ENCODE measurements at regions of chr3 and their contacts with region 1.

Region 1: GRCh38 chr3:186617038-186617946 is 4.4 kb downstream of the AHSG start:
- DNase-seq: peak; percentile 67 to 87 (median 83)
- ATAC-seq: peak; percentile 99
- H3K4me3 ChIP-seq: peak overlapping the region; percentile 23
- H3K4me3 Mint-ChIP-seq: peak overlapping the region; percentile 47 to 81 (median 74)
- H3K27ac ChIP-seq: no peak overlapping the region
- H3K27ac Mint-ChIP-seq: peak overlapping the region in 8 of 9 donors; percentile 51 to 81 (median 62)
- H3K4me1 ChIP-seq: peaks cover 5 to 10% of the 10 kb centered on the region in 2 donors
- H3K4me1 Mint-ChIP-seq: peaks cover 14 to 30% (median 21%) of the 10 kb centered on the region in 7 donors
- H3K27me3 ChIP-seq: no peaks in the 10 kb centered on the region
- H3K27me3 Mint-ChIP-seq: peaks cover 14 to 51% (median 26%) of the 10 kb centered on the region in 5 donors

Region 2: GRCh38 chr3:185659942-185660921 is 957.1 kb before region 1 on chr3:
- CTCF ChIA-PET with region 1: no interaction called
- POLR2A ChIA-PET with region 1: no interaction called
- intact Hi-C with region 1: loop called in 1 of 2 experiments (anchors 2 kb)
- DNase-seq: peak; percentile 35 to 60 (median 46)
- ATAC-seq: peak; percentile 88
- H3K4me3 ChIP-seq: no peak overlapping the region
- H3K4me3 Mint-ChIP-seq: no peak overlapping the region
- H3K27ac ChIP-seq: no peak overlapping the region
- H3K27ac Mint-ChIP-seq: no peak overlapping the region
- H3K4me1 ChIP-seq: no peaks in the 10 kb centered on the region
- H3K4me1 Mint-ChIP-seq: peaks cover 0 to 10% (median 0%) of the 10 kb centered on the region in 7 donors
- H3K27me3 ChIP-seq: no peaks in the 10 kb centered on the region
- H3K27me3 Mint-ChIP-seq: peaks cover 15 to 40% (median 20%) of the 10 kb centered on the region in 5 donors

Region 3: GRCh38 chr3:185983495-185984141 is 633.7 kb before region 1 on chr3:
- CTCF ChIA-PET with region 1: interaction called, 13 read pairs
- POLR2A ChIA-PET with region 1: no interaction called
- intact Hi-C with region 1: loop called (anchors 1 kb)
- DNase-seq: peak; percentile 7 to 62 (median 42)
- ATAC-seq: peak; percentile 83
- H3K4me3 ChIP-seq: no peak overlapping the region
- H3K4me3 Mint-ChIP-seq: no peak overlapping the region
- H3K27ac ChIP-seq: no peak overlapping the region
- H3K27ac Mint-ChIP-seq: no peak overlapping the region
- H3K4me1 ChIP-seq: no peaks in the 10 kb centered on the region
- H3K4me1 Mint-ChIP-seq: peaks cover 0 to 6% (median 5%) of the 10 kb centered on the region in 7 donors
- H3K27me3 ChIP-seq: no peaks in the 10 kb centered on the region
- H3K27me3 Mint-ChIP-seq: peaks cover 0 to 20% (median 7%) of the 10 kb centered on the region in 5 donors

Region 4: DNA sequence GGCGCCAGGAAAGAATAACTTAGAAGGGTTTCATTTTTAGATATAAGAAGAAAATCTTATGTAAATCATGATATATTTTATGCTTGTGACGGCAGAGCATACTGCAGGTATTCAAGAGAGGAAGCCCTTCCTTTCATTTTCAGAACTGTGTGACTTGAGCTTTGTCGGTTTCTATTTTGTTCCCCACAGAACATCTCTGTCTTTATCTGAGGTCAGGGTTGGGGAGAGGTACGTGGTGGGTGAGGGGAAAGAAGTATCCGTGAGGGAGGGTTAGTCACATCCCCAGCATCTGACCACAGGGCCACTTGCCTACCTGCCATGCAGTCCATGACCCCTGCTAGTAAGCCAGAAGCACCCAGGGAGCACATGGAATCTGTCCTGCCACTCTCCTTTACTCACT is 381.7 kb before region 1 on chr3:
- CTCF ChIA-PET with region 1: no interaction called
- POLR2A ChIA-PET with region 1: no interaction called
- intact Hi-C with region 1: no loop called
- DNase-seq: peak in 1 of 9 donors; percentile 16
- ATAC-seq: peak; percentile 41
- H3K4me3 ChIP-seq: no peak overlapping the region
- H3K4me3 Mint-ChIP-seq: peak overlapping the region; percentile 13 to 78 (median 56)
- H3K27ac ChIP-seq: no peak overlapping the region
- H3K27ac Mint-ChIP-seq: peak overlapping the region in 8 of 9 donors; percentile 8 to 92 (median 53)
- H3K4me1 ChIP-seq: peaks cover 0 to 6% of the 10 kb centered on the region in 2 donors
- H3K4me1 Mint-ChIP-seq: peaks cover 7 to 21% (median 14%) of the 10 kb centered on the region in 7 donors
- H3K27me3 ChIP-seq: no peaks in the 10 kb centered on the region
- H3K27me3 Mint-ChIP-seq: peaks cover 0 to 6% (median 0%) of the 10 kb centered on the region in 5 donors

Region 5: GRCh38 chr3:186413615-186414415 is 203.5 kb before region 1 on chr3:
- CTCF ChIA-PET with region 1: no interaction called
- POLR2A ChIA-PET with region 1: no interaction called
- intact Hi-C with region 1: no loop called
- DNase-seq: peak in 3 of 9 donors; percentile 1 to 5 (median 3)
- ATAC-seq: peak; percentile 55
- H3K4me3 ChIP-seq: peak overlapping the region; percentile 47
- H3K4me3 Mint-ChIP-seq: peak overlapping the region; percentile 61 to 87 (median 74)
- H3K27ac ChIP-seq: no peak overlapping the region
- H3K27ac Mint-ChIP-seq: peak overlapping the region in 4 of 9 donors; percentile 10 to 46 (median 36)
- H3K4me1 ChIP-seq: peaks cover 0 to 13% of the 10 kb centered on the region in 2 donors
- H3K4me1 Mint-ChIP-seq: peaks cover 9 to 29% (median 20%) of the 10 kb centered on the region in 7 donors
- H3K27me3 ChIP-seq: no peaks in the 10 kb centered on the region
- H3K27me3 Mint-ChIP-seq: peaks cover 0 to 26% (median 7%) of the 10 kb centered on the region in 5 donors

Region 6: DNA sequence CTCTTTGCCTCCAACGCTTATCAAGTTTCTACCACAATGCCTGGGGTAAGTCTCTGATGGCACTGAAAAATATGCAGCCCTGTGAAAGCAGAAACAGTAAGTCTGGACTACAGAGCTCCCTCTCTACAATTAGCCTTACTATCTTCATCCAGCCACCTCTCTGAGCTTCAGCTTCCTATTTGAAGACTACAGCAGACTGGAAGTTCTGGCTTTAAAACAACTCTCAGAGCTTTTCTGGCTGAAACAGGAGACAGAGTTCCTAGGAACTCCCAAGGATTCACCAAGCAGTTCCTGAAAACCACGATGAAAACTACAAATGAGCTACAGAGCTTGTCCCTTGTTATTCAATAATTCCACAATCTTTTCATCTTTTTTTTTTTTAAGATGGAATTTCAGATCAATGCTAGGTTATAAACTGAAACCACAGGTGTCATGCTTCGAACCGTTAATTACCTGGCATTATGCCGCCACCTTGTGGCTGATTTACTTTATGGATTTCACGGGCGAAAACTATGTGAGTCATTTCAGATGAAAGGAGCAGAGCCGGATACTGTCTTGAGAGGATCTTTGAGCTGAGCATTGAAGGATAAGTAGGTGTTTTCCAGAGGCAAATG is 77.0 kb before region 1 on chr3:
- CTCF ChIA-PET with region 1: interaction called, 18 read pairs
- POLR2A ChIA-PET with region 1: no interaction called
- intact Hi-C with region 1: loop called in 1 of 2 experiments (anchors 1 kb)
- DNase-seq: peak; percentile 48 to 84 (median 81)
- ATAC-seq: peak; percentile 98
- H3K4me3 ChIP-seq: no peak overlapping the region
- H3K4me3 Mint-ChIP-seq: peak overlapping the region in 1 of 10 donors; percentile 20
- H3K27ac ChIP-seq: no peak overlapping the region
- H3K27ac Mint-ChIP-seq: peak overlapping the region in 4 of 9 donors; percentile 13 to 73 (median 41)
- H3K4me1 ChIP-seq: peaks cover 3% of the 10 kb centered on the region in 2 donors
- H3K4me1 Mint-ChIP-seq: peaks cover 7 to 24% (median 8%) of the 10 kb centered on the region in 7 donors
- H3K27me3 ChIP-seq: no peaks in the 10 kb centered on the region
- H3K27me3 Mint-ChIP-seq: no peaks in the 10 kb centered on the region

Region 7: GRCh38 chr3:186806089-186807055 is 189.1 kb after region 1 on chr3 and contains the start of gene RFC4:
- CTCF ChIA-PET with region 1: interaction called, 4 read pairs
- POLR2A ChIA-PET with region 1: interaction called, 8 read pairs
- intact Hi-C with region 1: loop called in 1 of 2 experiments (anchors 1 kb)
- DNase-seq: peak; percentile 66 to 86 (median 82)
- ATAC-seq: peak; percentile 91
- H3K4me3 ChIP-seq: peak within 1 kb of the TSS; percentile 95
- H3K4me3 Mint-ChIP-seq: peak within 1 kb of the TSS; percentile 89 to 97 (median 94)
- H3K27ac ChIP-seq: peak within 1 kb of the TSS; percentile 86
- H3K27ac Mint-ChIP-seq: peak within 1 kb of the TSS; percentile 84 to 97 (median 95)
- H3K4me1 ChIP-seq: peaks cover 17 to 21% of the 10 kb centered on the region in 2 donors
- H3K4me1 Mint-ChIP-seq: peaks cover 5 to 38% (median 18%) of the 10 kb centered on the region in 7 donors
- H3K27me3 ChIP-seq: no peaks in the 10 kb centered on the region
- H3K27me3 Mint-ChIP-seq: no peaks in the 10 kb centered on the region
- total RNA-seq, gene RFC4: 8.7 to 71.6 (median 22.1) TPM

Region 8: DNA sequence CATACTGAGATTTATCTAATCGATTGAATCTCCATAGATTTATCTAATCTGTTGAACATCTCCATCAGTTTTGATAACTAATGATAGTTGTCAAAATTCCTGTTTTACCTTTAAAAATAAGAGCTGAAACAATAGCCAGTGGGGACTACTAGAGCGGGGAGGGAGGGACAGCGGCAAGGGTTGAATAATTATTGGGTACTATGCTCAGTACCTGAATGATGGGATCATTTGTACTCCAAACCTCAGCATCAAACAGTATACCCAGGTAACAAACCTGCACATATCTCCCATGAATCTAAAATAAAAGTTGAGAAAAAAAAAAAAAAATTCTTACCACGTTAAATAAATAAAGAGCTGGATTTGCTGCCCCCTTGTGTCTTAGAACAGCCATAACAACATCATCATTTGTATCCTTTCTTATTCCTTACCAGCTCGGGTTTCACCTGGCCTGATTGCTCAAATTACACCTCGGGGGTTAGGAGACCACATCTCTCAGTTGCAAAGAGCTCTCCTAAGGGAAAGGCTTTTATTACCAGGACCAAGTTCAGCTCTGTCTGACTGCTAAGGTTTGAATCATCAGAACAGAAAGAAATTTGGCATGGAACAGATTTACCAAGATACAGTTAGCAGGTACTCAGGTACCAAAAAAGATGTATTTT is 547.7 kb after region 1 on chr3:
- CTCF ChIA-PET with region 1: interaction called, 3 read pairs
- POLR2A ChIA-PET with region 1: no interaction called
- intact Hi-C with region 1: loop called (anchors 1 to 2 kb)
- DNase-seq: peak in 7 of 9 donors; percentile 53 to 78 (median 72)
- ATAC-seq: peak; percentile 86
- H3K4me3 ChIP-seq: no peak overlapping the region
- H3K4me3 Mint-ChIP-seq: no peak overlapping the region
- H3K27ac ChIP-seq: no peak overlapping the region
- H3K27ac Mint-ChIP-seq: peak overlapping the region in 1 of 9 donors; percentile 21
- H3K4me1 ChIP-seq: peaks cover 0 to 5% of the 10 kb centered on the region in 2 donors
- H3K4me1 Mint-ChIP-seq: peaks cover 3 to 15% (median 7%) of the 10 kb centered on the region in 7 donors
- H3K27me3 ChIP-seq: no peaks in the 10 kb centered on the region
- H3K27me3 Mint-ChIP-seq: peaks cover 0 to 39% (median 4%) of the 10 kb centered on the region in 5 donors

Measured in naive thymus-derived CD4-positive, alpha-beta T cell (primary cell).